ENCODE measurements at regions of chr11 and their contacts with region 1.

Region 1: GRCh38 chr11:35822815-35823495 is 120.9 kb upstream of the LDLRAD3 start:
- DNase-seq: no peak
- ATAC-seq: no peak

Region 2: DNA sequence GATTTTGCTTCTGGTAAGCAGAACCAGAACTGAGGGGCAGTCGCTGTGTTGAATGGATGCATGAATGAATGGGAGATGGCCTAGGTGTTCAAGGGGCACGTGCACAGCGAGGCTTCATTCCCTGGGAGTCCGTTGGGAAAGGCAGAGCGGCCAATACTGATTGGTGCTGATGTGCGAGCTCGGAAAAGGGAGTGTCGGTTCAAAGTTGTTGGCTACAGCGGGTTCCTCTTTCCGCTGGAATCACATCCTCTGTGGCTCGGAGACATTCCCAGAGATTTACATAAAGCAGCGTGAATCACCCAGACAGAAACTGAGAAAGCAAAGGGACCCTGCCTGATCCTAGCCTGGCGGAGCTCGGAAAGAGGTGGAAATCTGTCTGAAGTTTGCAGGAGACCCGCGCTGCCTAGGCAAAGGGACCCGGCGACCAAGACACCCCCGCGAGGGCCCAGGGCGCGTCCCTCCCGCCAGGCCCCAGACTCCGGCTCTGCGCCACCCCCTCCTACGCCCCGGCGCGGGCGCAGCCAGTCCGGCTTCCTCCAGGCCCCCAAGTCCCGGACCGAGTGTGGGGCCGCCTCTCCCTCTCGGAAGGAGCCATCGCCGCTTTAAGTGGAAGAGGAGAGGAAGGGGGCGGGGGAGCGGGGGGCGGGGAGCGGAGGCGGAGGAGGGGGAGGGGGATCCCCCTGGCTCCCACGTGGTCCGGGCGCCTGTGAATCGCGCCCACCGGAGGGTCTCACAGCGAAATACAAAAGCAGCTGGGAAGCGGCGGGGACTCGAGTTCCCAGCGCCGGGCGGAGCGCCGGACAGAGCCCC is 205.1 kb before region 1 on chr11 and contains the start of gene FJX1:
- intact Hi-C with region 1: loop called in 1 of 2 experiments (anchors 5 kb)
- DNase-seq: peak; percentile 78
- ATAC-seq: peak; percentile 70 to 84
- total RNA-seq, gene FJX1: 1.1 to 9.4 TPM

Region 3: DNA sequence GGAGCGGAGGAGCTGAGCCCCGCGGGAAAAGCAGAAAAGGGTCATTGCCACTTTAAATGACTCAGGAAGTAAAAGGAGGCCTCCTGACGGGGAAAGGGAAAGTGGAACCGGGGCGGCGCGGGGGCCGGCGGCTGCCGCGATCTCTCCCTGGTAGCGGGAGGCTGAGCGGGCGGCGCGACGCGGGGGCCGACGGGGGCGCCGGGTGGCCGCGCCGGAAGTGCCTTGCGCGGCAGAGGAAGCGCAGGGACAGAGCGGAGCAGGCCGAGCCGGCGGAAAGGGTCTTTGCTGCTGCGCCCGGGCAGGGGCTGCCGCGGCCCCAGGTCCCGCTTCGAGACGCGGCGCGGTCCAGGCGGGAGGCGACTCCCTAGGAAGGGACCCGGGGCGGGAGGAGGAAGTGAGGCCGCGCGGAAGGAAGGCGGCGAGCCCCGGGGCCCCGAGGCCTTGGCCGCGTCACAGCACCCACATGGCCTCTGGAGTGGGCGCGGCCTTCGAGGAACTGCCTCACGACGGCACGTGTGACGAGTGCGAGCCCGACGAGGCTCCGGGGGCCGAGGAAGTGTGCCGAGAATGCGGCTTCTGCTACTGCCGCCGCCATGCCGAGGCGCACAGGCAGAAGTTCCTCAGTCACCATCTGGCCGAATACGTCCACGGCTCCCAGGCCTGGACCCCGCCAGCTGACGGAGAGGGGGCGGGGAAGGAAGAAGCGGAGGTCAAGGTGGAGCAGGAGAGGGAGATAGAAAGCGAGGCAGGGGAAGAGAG is 160.1 kb before region 1 on chr11 and contains the start of gene TRIM44:
- intact Hi-C with region 1: loop called in 1 of 2 experiments (anchors 10 kb)
- DNase-seq: peak; percentile 88
- ATAC-seq: peak; percentile 95 to 98
- total RNA-seq, gene TRIM44: 35.0 to 46.0 TPM

Region 4: DNA sequence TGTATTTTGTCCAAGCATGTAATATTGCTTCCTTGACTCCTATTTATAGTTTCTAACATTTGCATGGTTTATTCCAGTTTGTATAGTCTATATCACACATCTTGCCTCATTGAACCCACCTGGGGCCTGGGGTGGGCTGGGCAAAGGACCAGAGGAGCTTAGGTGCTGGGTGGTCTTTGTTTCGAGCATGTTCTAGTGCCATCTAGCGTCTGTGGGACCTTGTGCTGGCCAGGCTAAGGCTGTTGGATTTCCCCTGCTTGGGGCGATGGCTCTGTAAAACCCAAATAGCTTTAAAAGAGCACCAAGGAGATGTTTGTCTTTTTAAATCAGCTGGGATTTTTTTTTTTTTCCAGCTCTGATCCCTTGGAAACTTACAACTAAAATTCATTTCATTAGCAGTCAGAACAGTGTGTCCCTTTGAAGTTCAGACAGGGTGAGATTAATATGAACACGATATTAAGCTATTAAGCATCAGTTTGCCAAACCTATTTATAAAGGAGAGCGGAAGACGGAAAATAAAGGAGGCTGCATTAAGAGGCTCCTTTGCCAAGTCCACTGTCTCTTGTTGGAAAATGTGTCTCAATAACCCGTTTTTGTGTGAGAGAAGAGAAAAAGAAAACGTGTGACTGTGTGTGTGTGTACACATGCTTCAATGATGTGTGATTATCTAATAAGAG is 308.9 kb after region 1 on chr11:
- intact Hi-C with region 1: loop called (anchors 5 to 10 kb)
- DNase-seq: peak; percentile 66
- ATAC-seq: peak; percentile 84 to 85

Region 5: GRCh38 chr11:36258730-36259360 is 435.9 kb after region 1 on chr11:
- intact Hi-C with region 1: loop called in 1 of 2 experiments (anchors 10 kb)
- DNase-seq: peak; percentile 54
- ATAC-seq: peak; percentile 71 to 88

Region 6: DNA sequence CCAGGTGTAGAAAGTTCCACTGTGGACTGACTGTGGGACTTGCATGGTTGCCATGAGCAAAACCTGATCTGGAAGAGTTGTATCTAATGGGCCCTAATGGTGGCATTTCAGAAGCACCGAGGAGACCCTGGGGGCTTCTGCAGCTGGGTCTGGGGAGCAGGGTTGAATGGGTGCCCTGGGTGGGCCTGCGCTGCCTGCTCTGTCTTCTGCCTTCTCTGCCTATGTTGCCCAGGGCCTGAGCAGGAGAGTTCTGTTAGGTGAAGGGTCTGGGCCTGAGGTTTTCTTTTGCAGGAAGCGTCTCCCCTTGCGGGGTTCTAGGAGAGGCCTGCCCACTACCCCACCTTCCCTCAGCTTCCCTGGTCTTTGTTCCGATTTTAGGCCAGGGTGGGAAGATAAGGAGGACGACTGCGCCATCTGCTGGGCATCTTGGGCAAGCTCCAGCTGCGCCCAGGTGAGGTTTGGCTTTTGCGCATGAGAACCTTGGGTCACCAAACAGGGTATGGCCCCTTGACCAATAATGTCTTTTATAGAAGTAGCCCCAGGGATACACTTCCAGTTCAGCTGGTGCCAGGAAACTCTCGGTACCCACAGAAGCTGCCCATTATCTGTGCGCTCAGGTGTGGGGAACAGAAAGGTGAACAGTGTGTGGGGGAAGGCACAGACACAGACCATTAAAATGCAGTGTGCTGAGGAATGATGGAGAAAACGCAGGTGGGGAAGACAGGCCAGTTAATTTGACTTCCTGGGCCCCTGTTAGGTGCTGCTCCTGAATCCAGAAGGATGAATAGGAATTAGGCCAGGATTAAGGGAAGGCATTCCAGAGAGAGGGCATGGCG is 443.1 kb after region 1 on chr11:
- intact Hi-C with region 1: loop called in 1 of 2 experiments (anchors 5 kb)
- DNase-seq: peak; percentile 48
- ATAC-seq: peak; percentile 56 to 78

Measured in left cardiac atrium (tissue), 4 donors.